B cell (primary cell): ENCODE measurements at regions of chr1 and their contacts with region 1.

Region 1: DNA sequence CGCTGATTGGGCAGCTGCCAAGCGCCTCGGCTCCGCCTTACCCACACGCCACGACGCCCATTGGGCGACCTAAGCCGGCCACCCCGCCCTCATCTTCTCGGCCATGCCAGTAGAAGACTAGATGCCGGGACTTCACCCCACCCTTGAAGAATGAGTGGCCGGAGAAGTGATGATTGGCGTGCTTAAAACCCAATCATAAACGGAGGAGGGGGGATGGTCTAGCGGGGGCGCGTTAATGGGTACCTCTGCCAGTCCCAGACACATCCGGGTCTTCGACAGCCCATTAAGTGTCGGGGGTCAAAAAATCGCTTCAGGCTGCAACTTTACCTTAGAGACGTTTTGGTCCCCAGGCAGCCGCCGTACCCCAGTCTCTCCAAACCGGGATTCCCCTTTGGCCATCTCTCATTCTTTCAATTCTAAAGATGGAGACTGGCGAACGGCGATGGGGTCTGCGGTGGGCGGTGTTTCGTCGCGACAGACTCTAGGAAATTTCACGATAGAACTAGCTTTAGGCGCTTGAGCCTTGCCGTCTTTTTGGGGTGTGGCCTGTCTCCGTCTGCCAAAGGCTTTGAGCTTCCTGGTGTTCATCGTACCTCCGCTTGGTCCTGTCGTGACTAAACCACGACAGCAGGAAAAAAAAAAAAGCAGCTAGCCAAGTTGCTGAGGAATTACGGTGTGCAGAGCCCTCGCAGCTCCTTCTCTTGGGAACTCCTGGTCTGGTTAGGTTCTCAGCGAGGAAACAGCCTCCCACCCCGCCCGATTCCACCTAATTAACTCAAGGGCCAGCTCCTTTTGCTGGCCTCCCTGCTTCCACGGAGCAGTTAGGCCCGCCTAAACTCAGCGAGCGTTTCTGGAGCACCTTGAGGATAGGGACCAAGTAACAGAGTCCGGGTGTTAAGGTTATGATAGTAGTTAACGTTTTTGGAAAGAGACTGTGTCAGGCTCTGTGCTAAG is at the start of gene GATAD2B:
- DNase-seq: peak; percentile 100
- ATAC-seq: peak; percentile 91
- H3K4me3 ChIP-seq: peak within 1 kb of the TSS; percentile 85 to 98 (median 97)
- H3K4me3 Mint-ChIP-seq: peak within 1 kb of the TSS; percentile 95
- H3K27ac ChIP-seq: peak within 1 kb of the TSS; percentile 84 to 99
- H3K27ac Mint-ChIP-seq: peak within 1 kb of the TSS; percentile 99
- H3K4me1 ChIP-seq: peaks cover 39 to 41% of the 10 kb centered on the region in 2 donors
- H3K4me1 Mint-ChIP-seq: peaks cover 43% of the 10 kb centered on the region
- H3K27me3 ChIP-seq: no peaks in the 10 kb centered on the region
- H3K27me3 Mint-ChIP-seq: no peaks in the 10 kb centered on the region
- CTCF ChIP-seq: no peak
- total RNA-seq, gene GATAD2B: 99.6 and 105 TPM in 2 replicates

Region 2: GRCh38 chr1:153515504-153516394 is 407.5 kb before region 1 on chr1:
- CTCF ChIA-PET with region 1: no interaction called
- POLR2A ChIA-PET with region 1: no interaction called
- intact Hi-C with region 1: no loop called
- DNase-seq: no peak
- ATAC-seq: no peak
- H3K4me3 ChIP-seq: no peak overlapping the region
- H3K4me3 Mint-ChIP-seq: no peak overlapping the region
- H3K27ac ChIP-seq: no peak overlapping the region
- H3K27ac Mint-ChIP-seq: no peak overlapping the region
- H3K4me1 ChIP-seq: no peaks in the 10 kb centered on the region
- H3K4me1 Mint-ChIP-seq: no peaks in the 10 kb centered on the region
- H3K27me3 ChIP-seq: no peaks in the 10 kb centered on the region
- H3K27me3 Mint-ChIP-seq: peaks cover 7% of the 10 kb centered on the region
- CTCF ChIP-seq: no peak

Region 3: DNA sequence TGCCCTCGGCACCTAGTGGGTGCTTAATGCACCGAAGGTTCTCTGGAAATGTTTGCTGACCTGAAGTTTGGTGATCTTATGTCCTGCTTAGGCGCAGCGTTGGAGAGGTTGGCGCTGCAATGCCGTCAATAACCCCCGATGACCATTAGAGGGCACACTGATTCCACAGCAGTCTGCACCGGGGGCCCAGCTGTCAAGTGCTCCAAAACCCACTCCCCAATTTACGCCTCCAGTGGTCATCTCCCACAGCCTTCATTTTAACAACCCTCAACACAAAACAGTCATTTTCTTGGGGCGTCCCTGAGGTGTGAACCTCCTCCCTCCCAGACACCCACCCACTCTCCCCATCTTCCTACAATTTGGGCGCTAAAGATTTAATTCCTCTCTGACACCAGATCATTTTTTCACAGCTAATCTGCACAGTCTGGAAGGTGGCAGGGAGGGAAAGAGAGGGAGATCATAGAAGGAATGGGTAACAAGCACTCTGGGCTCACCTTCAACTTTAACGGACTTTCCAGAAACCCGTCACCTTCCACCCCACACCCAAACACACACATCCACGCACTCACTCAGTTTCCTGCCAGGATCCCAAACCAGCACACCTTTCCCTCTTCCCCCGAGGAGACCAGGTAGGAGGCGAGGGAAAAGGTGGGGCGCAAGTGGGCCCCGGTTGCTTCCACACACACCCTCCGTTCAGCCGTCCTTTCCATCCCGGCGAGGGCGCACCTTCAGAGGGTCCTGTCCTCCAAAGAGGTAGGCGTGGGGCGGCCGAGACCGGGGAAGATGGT is 245.3 kb before region 1 on chr1:
- CTCF ChIA-PET with region 1: no interaction called
- POLR2A ChIA-PET with region 1: interaction called, 10 read pairs
- intact Hi-C with region 1: no loop called
- DNase-seq: peak; percentile 73
- ATAC-seq: peak; percentile 77
- H3K4me3 ChIP-seq: peak overlapping the region in 4 of 5 experiments; percentile 28 to 57 (median 50)
- H3K4me3 Mint-ChIP-seq: peak overlapping the region; percentile 94
- H3K27ac ChIP-seq: no peak overlapping the region
- H3K27ac Mint-ChIP-seq: peak overlapping the region; percentile 5
- H3K4me1 ChIP-seq: peaks cover 26 to 30% of the 10 kb centered on the region in 2 donors
- H3K4me1 Mint-ChIP-seq: peaks cover 26% of the 10 kb centered on the region
- H3K27me3 ChIP-seq: peaks cover 0 to 37% (median 24%) of the 10 kb centered on the region in 4 experiments
- H3K27me3 Mint-ChIP-seq: peaks cover 49% of the 10 kb centered on the region
- CTCF ChIP-seq: peak; percentile 88

Region 4: GRCh38 chr1:153816283-153816889 is 106.9 kb before region 1 on chr1:
- CTCF ChIA-PET with region 1: interaction called, 11 read pairs
- POLR2A ChIA-PET with region 1: no interaction called
- intact Hi-C with region 1: loop called (anchors 1 kb)
- DNase-seq: no peak
- ATAC-seq: no peak
- H3K4me3 ChIP-seq: no peak overlapping the region
- H3K4me3 Mint-ChIP-seq: no peak overlapping the region
- H3K27ac ChIP-seq: no peak overlapping the region
- H3K27ac Mint-ChIP-seq: no peak overlapping the region
- H3K4me1 ChIP-seq: peaks cover 0 to 1% of the 10 kb centered on the region in 2 donors
- H3K4me1 Mint-ChIP-seq: peaks cover 3% of the 10 kb centered on the region
- H3K27me3 ChIP-seq: no peaks in the 10 kb centered on the region
- H3K27me3 Mint-ChIP-seq: no peaks in the 10 kb centered on the region
- CTCF ChIP-seq: no peak

Region 5: DNA sequence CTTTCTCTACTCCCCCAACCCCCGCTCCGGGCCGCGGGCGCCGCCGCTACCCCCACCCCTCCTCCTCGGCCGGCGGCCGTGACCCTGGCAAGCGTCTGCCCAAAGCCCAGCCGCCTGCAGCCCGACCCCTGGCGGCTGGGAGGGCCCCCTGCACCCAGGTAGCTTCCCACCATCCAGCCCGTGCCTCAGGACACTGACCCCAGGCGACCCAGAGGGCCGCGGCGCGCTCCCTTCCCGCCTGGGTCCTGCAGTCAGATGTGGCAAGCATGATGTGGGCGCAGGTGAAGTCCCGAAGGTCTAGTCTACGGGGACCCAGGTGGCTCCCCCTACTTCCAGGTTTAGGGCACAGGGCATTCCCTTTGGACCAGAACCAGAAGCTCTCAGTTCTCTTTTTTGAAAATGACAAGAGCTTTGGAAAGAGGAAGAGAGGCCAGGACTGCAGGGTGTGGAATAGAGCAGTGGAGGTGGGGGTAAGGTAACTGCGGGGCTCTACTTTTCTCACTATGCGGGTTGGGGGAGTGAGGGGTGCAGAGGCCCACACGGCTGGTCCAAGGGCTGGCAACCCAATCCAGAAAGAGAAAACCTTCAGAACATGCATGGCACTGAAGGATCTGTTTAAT is 23.5 kb after region 1 on chr1 and contains the start of gene DENND4B:
- CTCF ChIA-PET with region 1: interaction called, 43 read pairs
- POLR2A ChIA-PET with region 1: interaction called, 124 read pairs
- intact Hi-C with region 1: loop called (anchors 1 kb)
- DNase-seq: peak; percentile 89
- ATAC-seq: peak; percentile 54
- H3K4me3 ChIP-seq: peak within 1 kb of the TSS; percentile 54 to 95 (median 85)
- H3K4me3 Mint-ChIP-seq: peak within 1 kb of the TSS; percentile 94
- H3K27ac ChIP-seq: peak within 1 kb of the TSS; percentile 91 to 98
- H3K27ac Mint-ChIP-seq: peak within 1 kb of the TSS; percentile 96
- H3K4me1 ChIP-seq: peaks cover 36 to 53% of the 10 kb centered on the region in 2 donors
- H3K4me1 Mint-ChIP-seq: peaks cover 56% of the 10 kb centered on the region
- H3K27me3 ChIP-seq: no peaks in the 10 kb centered on the region
- H3K27me3 Mint-ChIP-seq: no peaks in the 10 kb centered on the region
- CTCF ChIP-seq: peak; percentile 87
- total RNA-seq, gene DENND4B: 272 and 275 TPM in 2 replicates

Region 6: GRCh38 chr1:153977250-153978240 is 54.3 kb after region 1 on chr1 and contains the start of gene JTB:
- CTCF ChIA-PET with region 1: no interaction called
- POLR2A ChIA-PET with region 1: interaction called, 8 read pairs
- intact Hi-C with region 1: loop called (anchors 2 kb)
- DNase-seq: peak; percentile 87
- ATAC-seq: peak; percentile 96
- H3K4me3 ChIP-seq: peak within 1 kb of the TSS; percentile 59 to 96 (median 90)
- H3K4me3 Mint-ChIP-seq: peak within 1 kb of the TSS; percentile 98
- H3K27ac ChIP-seq: peak within 1 kb of the TSS; percentile 55 to 87
- H3K27ac Mint-ChIP-seq: peak within 1 kb of the TSS; percentile 96
- H3K4me1 ChIP-seq: peaks cover 16 to 22% of the 10 kb centered on the region in 2 donors
- H3K4me1 Mint-ChIP-seq: peaks cover 34% of the 10 kb centered on the region
- H3K27me3 ChIP-seq: no peaks in the 10 kb centered on the region
- H3K27me3 Mint-ChIP-seq: no peaks in the 10 kb centered on the region
- CTCF ChIP-seq: no peak
- total RNA-seq, gene JTB: 99.1 and 106 TPM in 2 replicates